ENCODE measurements at regions of chr5 and their contacts with region 1.

Region 1: DNA sequence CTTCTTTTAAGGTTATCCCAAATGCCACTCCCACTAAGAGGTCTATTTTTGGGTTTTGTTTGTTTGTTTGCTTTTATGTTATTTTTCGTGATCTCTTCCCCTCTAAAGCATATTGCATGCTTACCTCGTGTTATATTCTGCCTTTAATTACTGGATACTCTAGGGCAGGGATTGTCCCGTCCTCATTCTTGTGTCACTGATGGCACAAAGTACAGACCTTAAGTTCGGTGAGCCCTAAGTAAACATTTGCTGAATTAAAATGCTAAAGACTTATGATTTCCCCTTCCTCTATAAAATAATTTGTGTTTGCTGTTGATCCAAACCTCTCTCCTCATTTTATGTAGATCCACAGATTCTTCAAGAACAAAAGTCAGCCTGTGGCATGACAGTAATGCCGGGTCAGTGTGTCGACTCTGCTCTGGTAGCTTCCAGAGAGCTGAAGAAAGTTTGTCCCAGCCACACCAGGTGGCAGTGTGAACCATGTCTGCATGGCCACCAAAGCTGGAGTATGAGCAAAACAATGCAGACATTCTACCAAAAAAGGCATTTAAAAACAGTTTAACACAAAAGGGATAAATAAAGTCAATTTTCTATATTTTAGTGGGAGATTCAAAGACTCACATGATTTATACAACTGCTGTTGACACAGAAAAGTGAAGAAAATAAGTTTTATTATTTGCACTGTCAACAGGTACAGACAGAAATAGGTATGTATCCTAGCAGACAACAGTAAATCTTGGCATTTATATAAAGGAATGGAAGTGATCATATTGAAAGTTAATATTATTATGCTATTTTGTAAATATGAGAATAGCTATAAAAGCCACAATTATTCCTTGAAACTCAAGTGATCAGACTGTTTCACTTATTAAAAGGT is 17.9 kb upstream of the POC5 start:
- DNase-seq: peak; percentile 39
- CTCF ChIP-seq: peak; percentile 38

Region 2: GRCh38 chr5:76225336-76225735 is 490.2 kb after region 1 on chr5:
- in situ Hi-C with region 1: loop called (anchors 25 kb)
- DNase-seq: no peak
- CTCF ChIP-seq: no peak

Measured in GM13976 (cell line).